ENCODE measurements at regions of chr15 and their contacts with region 1.

Region 1: DNA sequence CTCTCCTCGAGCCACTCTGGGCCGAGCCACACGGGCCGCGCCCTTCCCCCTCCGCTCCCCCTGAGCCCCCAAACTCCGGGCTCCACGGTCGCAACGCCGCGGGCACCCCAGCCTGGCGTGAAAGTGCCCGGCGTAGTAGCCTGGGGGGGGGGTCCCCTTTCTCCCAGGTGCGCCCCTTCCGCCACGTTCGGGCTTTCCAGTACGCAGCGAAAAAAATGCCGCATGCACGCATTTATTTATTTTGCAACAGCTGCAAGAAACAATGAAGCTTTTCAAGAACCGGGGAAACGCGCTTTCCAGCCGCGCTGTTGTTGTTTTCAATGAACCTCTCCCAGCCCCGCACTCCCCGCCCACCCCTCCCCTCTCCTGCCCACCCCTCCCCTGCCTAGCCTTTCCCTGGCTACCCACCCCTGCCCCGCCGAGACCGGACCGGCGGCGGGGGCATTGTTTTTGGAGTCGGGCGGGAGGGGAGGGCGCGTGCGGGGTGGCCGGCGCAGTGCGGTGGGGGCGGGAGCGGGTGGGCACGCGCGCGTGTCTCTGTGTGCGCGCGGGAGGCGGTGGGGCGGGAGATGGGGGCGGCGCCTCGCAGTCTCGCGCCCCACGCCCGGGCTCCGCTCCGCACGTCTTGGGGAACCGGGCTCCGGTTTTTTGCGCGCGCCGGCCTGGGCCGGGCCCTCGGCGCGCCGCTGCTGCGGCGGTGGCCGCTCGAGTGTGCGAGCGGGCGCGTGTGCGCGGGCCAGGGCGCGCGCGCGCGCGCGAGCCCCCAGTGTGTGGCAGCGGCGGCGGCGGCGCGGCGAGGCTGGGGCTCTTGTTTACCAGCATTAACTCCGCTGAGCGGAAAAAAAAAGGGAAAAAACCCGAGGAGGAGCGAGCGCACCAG is at the start of gene IGF1R:
- DNase-seq: peak; percentile 83
- H3K4me3 Mint-ChIP-seq: peak within 1 kb of the TSS; percentile 89
- H3K27ac Mint-ChIP-seq: peak within 1 kb of the TSS; percentile 83
- H3K4me1 Mint-ChIP-seq: peaks cover 14% of the 10 kb centered on the region
- H3K27me3 Mint-ChIP-seq: peaks cover 43% of the 10 kb centered on the region
- CTCF ChIP-seq: no peak
- total RNA-seq, gene IGF1R: 50.7 and 53.3 TPM in 2 replicates

Region 2: GRCh38 chr15:98442379-98442833 is 205.6 kb before region 1 on chr15:
- CTCF ChIA-PET with region 1: interaction called, 5 read pairs
- POLR2A ChIA-PET with region 1: interaction called, 3 read pairs
- intact Hi-C with region 1: loop called (anchors 1 kb)
- DNase-seq: peak; percentile 89
- H3K4me3 Mint-ChIP-seq: no peak overlapping the region
- H3K27ac Mint-ChIP-seq: no peak overlapping the region
- H3K4me1 Mint-ChIP-seq: peaks cover 9% of the 10 kb centered on the region
- H3K27me3 Mint-ChIP-seq: peaks cover 22% of the 10 kb centered on the region
- CTCF ChIP-seq: peak; percentile 89

Region 3: DNA sequence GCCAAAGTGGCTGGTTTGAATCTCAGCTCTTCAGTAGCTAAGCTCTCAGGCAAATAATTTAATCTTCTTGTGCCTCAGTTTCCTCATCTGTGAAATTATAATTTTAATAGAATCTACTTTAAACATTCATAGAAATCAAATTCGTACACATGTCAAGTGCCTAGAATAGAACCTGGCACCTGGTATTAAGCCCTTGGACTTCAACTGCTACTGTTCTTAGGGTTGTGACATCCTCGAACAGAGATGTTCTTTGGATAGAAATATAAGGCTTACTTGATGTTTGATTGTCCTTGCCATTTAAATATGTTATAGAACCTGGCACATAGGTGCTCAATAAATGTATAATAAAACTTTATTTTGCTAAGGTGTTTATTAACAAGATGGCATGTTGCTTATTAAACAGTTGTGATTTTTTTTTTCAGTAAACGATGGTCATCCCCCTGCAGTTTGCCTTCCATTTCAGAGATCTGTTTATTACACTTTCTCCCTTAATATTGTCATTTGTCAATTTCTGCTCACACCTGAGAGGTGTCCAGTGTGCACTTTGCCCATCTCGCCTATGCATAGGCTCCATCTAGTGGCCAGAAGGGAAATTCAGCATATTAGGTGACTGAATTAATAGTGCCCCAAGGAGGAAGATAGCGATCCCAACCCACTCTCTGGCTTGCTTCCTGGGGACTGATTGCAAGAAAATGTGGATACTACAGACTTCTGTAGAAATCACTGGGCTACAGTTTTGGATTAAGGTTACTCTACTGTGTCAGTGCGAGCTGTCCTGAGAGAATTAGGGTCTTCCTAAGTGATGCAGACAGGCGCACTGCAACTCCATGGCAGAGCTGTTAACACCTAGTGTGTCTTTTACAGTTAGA is 11.1 kb after region 1 on chr15:
- CTCF ChIA-PET with region 1: interaction called, 20 read pairs
- POLR2A ChIA-PET with region 1: interaction called, 33 read pairs
- intact Hi-C with region 1: no loop called
- DNase-seq: peak; percentile 76
- H3K4me3 Mint-ChIP-seq: no peak overlapping the region
- H3K27ac Mint-ChIP-seq: peak overlapping the region; percentile 3
- H3K4me1 Mint-ChIP-seq: peaks cover 44% of the 10 kb centered on the region
- H3K27me3 Mint-ChIP-seq: no peaks in the 10 kb centered on the region
- CTCF ChIP-seq: peak; percentile 69

Region 4: DNA sequence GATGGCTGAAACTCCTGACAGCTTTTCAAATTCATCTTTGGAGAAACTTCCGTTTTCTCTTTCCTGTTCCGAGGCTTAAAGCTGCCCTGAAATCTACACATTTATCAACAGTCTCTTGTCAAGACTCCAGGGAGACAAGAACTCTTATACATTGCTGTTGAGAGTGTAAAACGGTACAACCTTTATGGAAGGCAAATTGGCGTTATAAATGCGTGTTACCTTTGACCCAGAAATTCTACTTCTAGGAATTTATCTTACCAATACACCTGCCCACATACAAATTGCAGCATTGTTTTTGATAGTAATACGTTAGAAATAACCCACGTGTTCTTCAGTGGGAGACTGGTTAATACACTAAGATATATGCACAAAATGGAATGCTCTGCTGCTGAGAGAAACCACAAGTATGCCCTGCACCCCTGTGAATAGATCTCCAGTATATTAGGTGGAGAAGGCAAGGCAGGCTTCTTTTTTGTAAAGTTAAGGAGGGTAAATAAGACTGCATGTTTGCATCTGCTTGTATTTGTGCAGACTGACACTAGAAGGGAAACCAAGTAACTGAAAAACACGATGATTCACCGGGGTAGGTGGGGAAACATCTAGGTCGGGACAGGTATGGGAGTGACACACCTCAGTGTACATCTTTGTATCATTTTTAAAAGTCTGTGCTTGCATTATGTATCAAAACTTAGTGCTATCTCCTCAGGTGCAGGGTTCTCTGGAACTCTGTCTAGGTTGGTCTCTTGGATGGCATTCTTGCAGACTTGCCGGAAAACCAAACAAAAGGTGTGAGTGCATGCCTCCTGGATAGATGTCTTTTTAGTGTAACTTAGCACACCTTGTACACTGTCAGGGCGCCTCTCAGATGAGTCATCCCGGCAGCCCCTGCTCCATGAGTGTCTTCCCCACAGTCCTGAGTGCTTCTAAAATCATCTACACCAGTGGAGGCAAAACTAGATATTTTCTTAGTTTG is 97.9 kb after region 1 on chr15:
- CTCF ChIA-PET with region 1: no interaction called
- POLR2A ChIA-PET with region 1: interaction called, 10 read pairs
- intact Hi-C with region 1: no loop called
- DNase-seq: peak; percentile 51
- H3K4me3 Mint-ChIP-seq: peak overlapping the region; percentile 29
- H3K27ac Mint-ChIP-seq: no peak overlapping the region
- H3K4me1 Mint-ChIP-seq: peaks cover 36% of the 10 kb centered on the region
- H3K27me3 Mint-ChIP-seq: no peaks in the 10 kb centered on the region
- CTCF ChIP-seq: no peak

Region 5: DNA sequence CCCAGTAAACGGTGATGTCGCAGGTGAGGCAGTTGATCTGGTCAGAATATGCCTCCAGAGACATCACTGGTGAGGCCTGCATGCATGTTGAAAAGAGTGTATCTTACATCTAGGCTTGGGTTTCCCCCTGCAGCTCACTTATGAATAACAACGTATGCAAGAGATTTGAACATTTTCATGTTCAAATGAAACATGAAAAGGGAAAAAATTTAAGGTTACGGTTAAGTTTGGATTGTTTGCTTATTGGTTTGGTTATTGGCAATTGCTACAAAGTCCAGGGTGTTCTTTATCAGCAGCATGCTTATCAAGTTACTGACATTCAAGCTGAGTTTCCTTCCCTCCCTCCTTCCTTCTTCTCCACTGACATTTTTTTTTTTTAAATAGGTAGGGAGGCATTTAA is 123.5 kb after region 1 on chr15:
- CTCF ChIA-PET with region 1: no interaction called
- POLR2A ChIA-PET with region 1: no interaction called
- intact Hi-C with region 1: no loop called
- DNase-seq: no peak
- H3K4me3 Mint-ChIP-seq: no peak overlapping the region
- H3K27ac Mint-ChIP-seq: no peak overlapping the region
- H3K4me1 Mint-ChIP-seq: no peaks in the 10 kb centered on the region
- H3K27me3 Mint-ChIP-seq: no peaks in the 10 kb centered on the region
- CTCF ChIP-seq: no peak

Region 6: GRCh38 chr15:98865397-98866339 is 217.7 kb after region 1 on chr15:
- CTCF ChIA-PET with region 1: no interaction called
- POLR2A ChIA-PET with region 1: interaction called, 148 read pairs
- intact Hi-C with region 1: no loop called
- DNase-seq: peak; percentile 84
- H3K4me3 Mint-ChIP-seq: peak overlapping the region; percentile 74
- H3K27ac Mint-ChIP-seq: peak overlapping the region; percentile 96
- H3K4me1 Mint-ChIP-seq: peaks cover 29% of the 10 kb centered on the region
- H3K27me3 Mint-ChIP-seq: no peaks in the 10 kb centered on the region
- CTCF ChIP-seq: no peak

Region 7: DNA sequence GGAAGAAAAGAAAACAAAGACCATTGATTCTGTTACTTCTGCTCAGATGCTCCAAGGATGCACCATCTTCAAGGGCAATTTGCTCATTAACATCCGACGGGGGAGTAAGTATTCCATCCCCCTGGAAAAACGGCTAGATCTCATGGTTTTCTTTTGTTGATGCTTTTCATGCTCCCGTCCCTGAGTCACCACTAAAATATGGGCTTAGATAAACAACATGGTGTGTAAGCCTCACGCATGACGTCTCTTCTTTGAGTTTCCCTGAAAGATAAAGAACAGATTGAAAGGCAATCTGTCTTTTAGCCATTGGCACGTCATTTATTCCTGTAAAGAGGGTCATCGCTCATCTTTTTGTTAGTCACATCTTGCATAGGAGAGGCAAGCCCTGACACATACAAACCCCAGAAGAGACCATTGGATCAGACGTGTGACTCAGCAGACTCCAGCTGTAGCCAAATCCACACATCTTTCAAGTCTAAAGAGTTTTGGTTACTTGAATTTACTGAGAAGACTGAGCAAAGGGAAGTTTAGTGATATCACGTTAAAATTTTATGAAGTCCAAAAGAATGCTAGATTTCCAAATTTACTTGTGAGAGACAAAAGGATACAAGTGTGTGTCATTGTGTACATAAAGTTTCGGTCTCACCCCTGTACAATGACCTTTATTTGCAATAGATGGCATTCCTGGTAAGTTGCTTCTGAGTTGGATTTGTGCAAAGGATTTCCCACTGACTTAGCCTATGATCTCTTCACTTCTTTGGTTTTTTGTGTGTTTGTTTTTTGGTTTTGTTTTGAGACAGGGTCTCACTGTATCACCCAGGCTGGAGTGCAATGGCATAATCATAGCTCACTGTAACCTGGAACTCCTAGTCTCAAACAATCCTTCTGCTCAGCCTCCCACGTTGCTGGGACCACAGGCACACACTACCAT is 249.1 kb after region 1 on chr15:
- CTCF ChIA-PET with region 1: interaction called, 3 read pairs
- POLR2A ChIA-PET with region 1: interaction called, 62 read pairs
- intact Hi-C with region 1: no loop called
- DNase-seq: peak; percentile 98
- H3K4me3 Mint-ChIP-seq: peak overlapping the region; percentile 62
- H3K27ac Mint-ChIP-seq: peak overlapping the region; percentile 95
- H3K4me1 Mint-ChIP-seq: peaks cover 45% of the 10 kb centered on the region
- H3K27me3 Mint-ChIP-seq: no peaks in the 10 kb centered on the region
- CTCF ChIP-seq: no peak

Region 8: GRCh38 chr15:99059010-99059981 is 411.3 kb after region 1 on chr15:
- CTCF ChIA-PET with region 1: no interaction called
- POLR2A ChIA-PET with region 1: interaction called, 3 read pairs
- intact Hi-C with region 1: loop called (anchors 5 kb)
- DNase-seq: peak; percentile 50
- H3K4me3 Mint-ChIP-seq: peak overlapping the region; percentile 63
- H3K27ac Mint-ChIP-seq: no peak overlapping the region
- H3K4me1 Mint-ChIP-seq: no peaks in the 10 kb centered on the region
- H3K27me3 Mint-ChIP-seq: peaks cover 30% of the 10 kb centered on the region
- CTCF ChIP-seq: peak; percentile 81

Measured in MCF 10A (cell line).